Activated naive CD4-positive, alpha-beta T cell treated with anti-CD3 and anti-CD28 coated beads, Interleukin-2, amount 10 ng/mL, durations not matched to agents 7 days and 5 days (primary cell): ENCODE measurements at regions of chr4 and their contacts with region 1.

Region 1: GRCh38 chr4:94621491-94622080 is 136.2 kb upstream of the BMPR1B start:
- DNase-seq: peak; percentile 29
- H3K4me3 Mint-ChIP-seq: no peak overlapping the region
- H3K27ac Mint-ChIP-seq: no peak overlapping the region
- H3K4me1 Mint-ChIP-seq: no peaks in the 10 kb centered on the region
- H3K27me3 Mint-ChIP-seq: no peaks in the 10 kb centered on the region

Region 2: GRCh38 chr4:94676970-94677369 is 55.4 kb after region 1 on chr4:
- CTCF ChIA-PET with region 1: no interaction called
- DNase-seq: no peak
- H3K4me3 Mint-ChIP-seq: no peak overlapping the region
- H3K27ac Mint-ChIP-seq: no peak overlapping the region
- H3K4me1 Mint-ChIP-seq: no peaks in the 10 kb centered on the region
- H3K27me3 Mint-ChIP-seq: peaks cover 3% of the 10 kb centered on the region

Region 3: GRCh38 chr4:95124906-95125504 is 503.4 kb after region 1 on chr4:
- CTCF ChIA-PET with region 1: interaction called, 19 read pairs
- DNase-seq: no peak
- H3K4me3 Mint-ChIP-seq: no peak overlapping the region
- H3K27ac Mint-ChIP-seq: no peak overlapping the region
- H3K4me1 Mint-ChIP-seq: no peaks in the 10 kb centered on the region
- H3K27me3 Mint-ChIP-seq: peaks cover 5% of the 10 kb centered on the region